Naive thymus-derived CD4-positive, alpha-beta T cell (primary cell): ENCODE measurements at regions of chr4 and their contacts with region 1.

Region 1: DNA sequence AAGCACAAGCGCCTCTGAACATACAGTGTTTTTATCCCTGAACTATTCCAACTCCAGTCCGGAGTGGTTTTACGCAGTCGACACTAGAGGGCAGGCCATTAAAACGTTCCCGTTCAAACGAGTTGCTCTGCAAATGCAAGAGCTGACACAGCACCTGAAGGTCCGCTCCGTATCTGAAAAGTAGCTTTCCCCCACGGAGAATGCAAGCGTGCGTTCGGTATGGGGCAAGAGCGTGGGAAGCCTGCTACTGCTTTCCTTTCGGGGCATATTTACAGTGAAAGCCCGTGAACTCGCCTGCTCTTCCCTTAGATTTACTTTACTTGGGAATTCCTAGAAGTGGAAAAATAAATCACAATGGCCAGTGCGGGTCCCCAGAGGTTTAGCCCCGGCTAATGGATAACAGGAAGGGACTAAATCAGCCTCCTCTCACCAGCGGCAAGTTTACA is 190.8 kb downstream of the TSPAN5 start:
- DNase-seq: peak; percentile 14 to 76 (median 65)
- ATAC-seq: peak; percentile 93
- H3K4me3 ChIP-seq: peak overlapping the region; percentile 11
- H3K4me3 Mint-ChIP-seq: peak overlapping the region; percentile 66 to 87 (median 74)
- H3K27ac ChIP-seq: no peak overlapping the region
- H3K27ac Mint-ChIP-seq: peak overlapping the region in 3 of 9 donors; percentile 24 to 34 (median 32)
- H3K4me1 ChIP-seq: no peaks in the 10 kb centered on the region
- H3K4me1 Mint-ChIP-seq: peaks cover 7 to 40% (median 24%) of the 10 kb centered on the region in 7 donors
- H3K27me3 ChIP-seq: no peaks in the 10 kb centered on the region
- H3K27me3 Mint-ChIP-seq: no peaks in the 10 kb centered on the region

Region 2: DNA sequence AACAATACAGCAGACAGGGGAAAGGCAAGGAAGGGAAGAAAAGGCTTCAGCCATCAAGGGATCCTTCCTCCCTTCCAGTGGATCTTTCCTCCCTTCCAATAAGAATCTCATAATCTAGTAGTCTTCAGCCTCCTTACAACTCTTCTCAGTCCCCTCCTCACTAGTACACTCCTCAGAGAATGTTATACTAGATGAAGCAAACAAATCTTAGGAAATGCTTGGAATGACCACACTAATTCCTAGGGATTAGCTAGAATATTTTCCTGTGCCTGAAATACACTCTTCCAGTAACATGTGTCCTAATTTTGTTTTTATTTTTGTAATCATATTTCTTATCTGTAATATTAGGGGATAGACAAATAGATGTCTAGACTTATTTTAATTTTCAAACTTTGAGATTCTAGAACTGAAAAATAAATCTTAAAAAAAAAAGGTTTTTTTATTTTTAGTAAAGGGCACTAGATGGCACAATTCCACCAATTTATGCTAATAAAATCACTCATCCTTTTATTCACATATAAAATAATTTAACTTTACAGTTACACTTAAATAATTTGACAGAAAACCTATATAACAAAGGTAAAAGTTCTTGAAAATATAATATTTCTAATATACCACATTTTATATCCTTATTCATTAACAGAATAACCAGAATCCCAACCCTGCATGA is 317.4 kb before region 1 on chr4:
- CTCF ChIA-PET with region 1: interaction called, 4 read pairs
- POLR2A ChIA-PET with region 1: no interaction called
- intact Hi-C with region 1: loop called in 1 of 2 experiments (anchors 1 kb)
- DNase-seq: peak in 1 of 9 donors; percentile 11
- ATAC-seq: no peak
- H3K4me3 ChIP-seq: no peak overlapping the region
- H3K4me3 Mint-ChIP-seq: no peak overlapping the region
- H3K27ac ChIP-seq: no peak overlapping the region
- H3K27ac Mint-ChIP-seq: peak overlapping the region in 2 of 9 donors; percentile 5 to 68
- H3K4me1 ChIP-seq: no peaks in the 10 kb centered on the region
- H3K4me1 Mint-ChIP-seq: peaks cover 0 to 14% (median 5%) of the 10 kb centered on the region in 7 donors
- H3K27me3 ChIP-seq: no peaks in the 10 kb centered on the region
- H3K27me3 Mint-ChIP-seq: peaks cover 0 to 11% (median 0%) of the 10 kb centered on the region in 5 donors